Caco-2 (cell line): ENCODE measurements at regions of chr3 and their contacts with region 1.

Region 1: DNA sequence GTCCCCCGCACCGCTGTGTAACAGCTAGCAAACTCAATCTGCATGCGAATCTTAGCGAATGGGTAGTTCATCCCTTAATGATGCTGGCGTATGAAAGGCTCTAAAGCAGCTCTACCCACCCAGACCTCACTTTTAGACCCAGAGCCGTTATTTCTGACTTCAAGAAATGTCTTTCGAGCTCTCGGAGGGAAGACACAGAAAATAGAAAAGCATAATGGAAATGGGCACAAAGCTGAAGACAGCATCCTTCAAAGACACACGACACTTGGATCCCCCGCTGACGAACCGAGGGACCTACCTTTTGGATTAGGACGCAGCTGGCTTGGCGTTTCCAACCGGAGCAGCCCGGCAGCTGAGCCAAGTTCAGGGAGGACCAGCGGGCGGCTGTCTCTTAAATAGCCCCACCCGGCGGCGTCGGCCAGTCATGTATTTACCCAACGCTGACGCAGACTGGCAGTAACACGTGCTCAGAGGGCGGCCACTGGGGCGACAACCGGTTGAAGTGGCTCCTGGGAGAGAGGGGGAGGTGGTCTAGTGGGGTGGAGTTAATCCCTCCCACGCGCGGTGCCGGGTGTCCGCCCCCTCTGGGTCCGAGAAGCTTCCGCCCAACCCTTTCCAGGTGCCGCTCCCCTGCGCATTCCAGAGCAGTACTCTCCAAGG is 1.5 kb downstream of the CCK start:
- DNase-seq: peak; percentile 62 to 73
- H3K4me3 ChIP-seq: no peak overlapping the region
- H3K4me3 Mint-ChIP-seq: peak overlapping the region; percentile 63
- H3K27ac Mint-ChIP-seq: no peak overlapping the region
- H3K4me1 ChIP-seq: no peaks in the 10 kb centered on the region
- H3K4me1 Mint-ChIP-seq: no peaks in the 10 kb centered on the region
- H3K27me3 ChIP-seq: no peaks in the 10 kb centered on the region
- H3K27me3 Mint-ChIP-seq: peaks cover 27% of the 10 kb centered on the region
- CTCF ChIP-seq: no peak

Region 2: GRCh38 chr3:42451546-42452230 is 187.2 kb after region 1 on chr3:
- CTCF ChIA-PET with region 1: no interaction called
- POLR2A ChIA-PET with region 1: no interaction called
- intact Hi-C with region 1: loop called (anchors 5 kb)
- DNase-seq: no peak
- H3K4me3 ChIP-seq: no peak overlapping the region
- H3K4me3 Mint-ChIP-seq: no peak overlapping the region
- H3K27ac Mint-ChIP-seq: no peak overlapping the region
- H3K4me1 ChIP-seq: no peaks in the 10 kb centered on the region
- H3K4me1 Mint-ChIP-seq: no peaks in the 10 kb centered on the region
- H3K27me3 ChIP-seq: no peaks in the 10 kb centered on the region
- H3K27me3 Mint-ChIP-seq: no peaks in the 10 kb centered on the region
- CTCF ChIP-seq: no peak